H1 (cell line): ENCODE measurements at regions of chr13 and their contacts with region 1.

Region 1: GRCh38 chr13:43804461-43805070 is 17.8 kb upstream of the ENOX1 start:
- DNase-seq: no peak
- H3K4me3 ChIP-seq: no peak overlapping the region
- H3K27ac ChIP-seq: no peak overlapping the region
- H3K4me1 ChIP-seq: peaks cover 6 to 10% (median 8%) of the 10 kb centered on the region in 4 experiments; a peak in 6 of 7 replicates
- H3K27me3 ChIP-seq: no peaks in the 10 kb centered on the region
- CTCF ChIP-seq: peak in 2 of 3 experiments; percentile 12 to 36; a peak in 2 of 4 replicates
- EP300 ChIP-seq: no peak
- POLR2A ChIP-seq: no peak
- RAD21 ChIP-seq: peak; percentile 51 to 62

Region 2: DNA sequence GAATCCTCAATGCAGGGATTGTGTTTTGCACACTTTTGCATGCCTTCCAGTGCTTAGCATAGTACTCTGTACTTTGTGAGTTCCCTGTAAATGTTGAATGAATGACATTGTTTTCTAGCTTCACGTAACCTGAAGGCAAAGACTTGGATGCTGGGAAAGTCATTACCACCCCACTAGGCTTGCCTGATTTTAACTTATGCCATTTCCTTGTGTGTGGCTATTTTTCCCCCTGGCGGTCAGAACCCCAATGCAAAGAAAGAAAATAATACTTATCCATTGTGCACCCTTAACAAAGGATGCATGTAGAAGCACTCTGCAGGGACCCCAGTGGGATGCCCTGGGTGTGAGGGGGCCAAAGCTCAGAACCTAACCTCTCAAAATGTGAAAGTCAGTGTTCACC is 16.6 kb before region 1 on chr13:
- CTCF ChIA-PET with region 1: interaction called, 28 read pairs
- POLR2A ChIA-PET with region 1: interaction called, 6 read pairs
- DNase-seq: no peak
- H3K4me3 ChIP-seq: peak overlapping the region in 2 of 4 experiments; percentile 39 to 81; a peak in 2 of 8 replicates
- H3K27ac ChIP-seq: no peak overlapping the region
- H3K4me1 ChIP-seq: peaks cover 3 to 6% (median 5%) of the 10 kb centered on the region in 4 experiments; a peak in 5 of 7 replicates
- H3K27me3 ChIP-seq: peaks cover 6 to 50% (median 33%) of the 10 kb centered on the region in 4 experiments
- CTCF ChIP-seq: peak in 1 of 3 experiments; percentile 48; a peak in 1 of 4 replicates
- EP300 ChIP-seq: no peak
- POLR2A ChIP-seq: no peak
- RAD21 ChIP-seq: peak; percentile 45 to 53

Region 3: GRCh38 chr13:43815204-43815603 is 10.6 kb after region 1 on chr13:
- CTCF ChIA-PET with region 1: interaction called, 11 read pairs
- POLR2A ChIA-PET with region 1: no interaction called
- DNase-seq: no peak
- H3K4me3 ChIP-seq: no peak overlapping the region
- H3K27ac ChIP-seq: no peak overlapping the region
- H3K4me1 ChIP-seq: no peaks in the 10 kb centered on the region
- H3K27me3 ChIP-seq: no peaks in the 10 kb centered on the region
- CTCF ChIP-seq: no peak
- EP300 ChIP-seq: no peak
- POLR2A ChIP-seq: no peak
- RAD21 ChIP-seq: no peak